AG04449 (cell line): ENCODE measurements at regions of chr11 and their contacts with region 1.

Region 1: DNA sequence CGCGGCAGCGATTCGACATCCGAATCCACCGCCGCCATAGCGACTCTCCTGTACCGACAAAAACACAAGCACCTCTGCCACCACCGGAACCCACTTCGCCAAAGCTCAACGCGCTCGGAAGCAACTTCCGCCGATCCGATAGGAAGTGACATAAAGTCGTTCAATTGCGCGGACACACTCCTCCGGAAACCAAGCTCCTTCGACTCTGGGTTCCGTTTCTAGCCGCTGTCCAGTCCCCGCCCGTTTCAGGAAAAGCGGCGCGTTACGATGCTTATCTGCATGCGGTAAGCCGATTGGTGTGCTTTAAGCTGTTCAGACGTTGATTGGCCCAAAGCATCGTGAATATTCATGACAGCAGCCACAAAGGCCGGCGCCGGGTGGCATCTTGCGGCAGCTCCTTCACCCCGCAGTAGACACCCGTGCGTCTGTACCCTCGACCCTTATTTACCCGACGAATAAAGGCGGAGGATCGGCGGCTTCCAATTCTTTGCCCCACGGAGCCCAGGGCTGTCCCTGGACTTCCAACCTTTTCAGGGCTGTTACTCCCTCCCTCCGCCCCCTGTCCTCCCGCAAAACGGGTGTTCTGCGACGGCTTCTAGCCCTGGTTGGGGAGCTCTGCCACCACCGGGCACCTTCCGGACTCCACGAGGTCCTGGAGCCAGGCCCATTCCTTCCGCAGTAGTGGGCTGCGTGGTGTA is at the start of gene TUT1:
- DNase-seq: peak; percentile 97
- H3K4me3 ChIP-seq: peak within 1 kb of the TSS; percentile 77
- CTCF ChIP-seq: no peak

Region 2: GRCh38 chr11:62419314-62419929 is 172.2 kb before region 1 on chr11:
- CTCF ChIA-PET with region 1: interaction called, 27 read pairs
- POLR2A ChIA-PET with region 1: interaction called, 5 read pairs
- DNase-seq: no peak
- H3K4me3 ChIP-seq: no peak overlapping the region
- CTCF ChIP-seq: no peak

Region 3: DNA sequence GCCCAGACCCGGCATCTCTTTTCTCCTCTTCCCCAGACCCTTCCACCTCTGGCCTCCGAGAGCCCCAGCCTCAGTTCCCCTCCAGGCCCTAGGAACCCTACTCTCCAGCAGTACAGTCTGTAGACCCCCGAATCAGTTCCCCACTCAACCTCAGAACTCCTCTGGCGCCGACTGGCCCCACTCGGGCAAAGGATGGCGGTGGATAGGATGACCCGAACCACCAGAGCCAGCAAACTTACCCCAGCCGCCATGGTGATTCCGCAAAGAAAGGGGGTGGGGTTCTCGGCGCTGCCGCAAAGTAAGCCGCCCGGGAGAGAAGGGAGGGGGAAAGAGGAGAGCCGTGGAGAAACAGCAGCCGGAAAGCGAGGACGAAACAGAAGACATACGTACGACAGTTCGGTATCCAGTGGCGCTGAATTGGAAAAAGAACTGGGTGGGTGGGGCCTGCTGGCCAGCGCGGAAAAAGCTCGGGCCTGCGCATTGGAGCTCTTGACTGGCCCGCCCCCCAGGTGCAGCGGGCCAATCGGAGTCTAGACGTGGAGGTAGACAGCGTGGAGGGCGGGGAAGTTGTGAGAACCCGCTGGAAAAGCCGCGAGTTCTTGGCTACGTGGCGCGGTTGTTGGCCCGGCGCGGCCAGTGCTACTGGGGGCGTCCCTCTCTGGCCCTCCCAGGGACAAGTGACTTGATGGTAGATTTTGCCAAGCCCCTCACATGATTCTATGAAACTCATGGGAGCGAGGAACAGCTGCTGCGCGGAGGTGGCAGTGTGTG is 17.8 kb before region 1 on chr11 and contains the start of gene EEF1G:
- CTCF ChIA-PET with region 1: interaction called, 8 read pairs
- POLR2A ChIA-PET with region 1: interaction called, 65 read pairs
- DNase-seq: peak; percentile 99
- H3K4me3 ChIP-seq: peak within 1 kb of the TSS; percentile 97
- CTCF ChIP-seq: no peak

Region 4: GRCh38 chr11:62612366-62613290 is 21.0 kb after region 1 on chr11 and contains the starts of genes EML3 and ROM1:
- CTCF ChIA-PET with region 1: interaction called, 95 read pairs
- POLR2A ChIA-PET with region 1: interaction called, 14 read pairs
- DNase-seq: no peak
- H3K4me3 ChIP-seq: peak within 1 kb of the TSS; percentile 75
- CTCF ChIP-seq: peak; percentile 95

Region 5: DNA sequence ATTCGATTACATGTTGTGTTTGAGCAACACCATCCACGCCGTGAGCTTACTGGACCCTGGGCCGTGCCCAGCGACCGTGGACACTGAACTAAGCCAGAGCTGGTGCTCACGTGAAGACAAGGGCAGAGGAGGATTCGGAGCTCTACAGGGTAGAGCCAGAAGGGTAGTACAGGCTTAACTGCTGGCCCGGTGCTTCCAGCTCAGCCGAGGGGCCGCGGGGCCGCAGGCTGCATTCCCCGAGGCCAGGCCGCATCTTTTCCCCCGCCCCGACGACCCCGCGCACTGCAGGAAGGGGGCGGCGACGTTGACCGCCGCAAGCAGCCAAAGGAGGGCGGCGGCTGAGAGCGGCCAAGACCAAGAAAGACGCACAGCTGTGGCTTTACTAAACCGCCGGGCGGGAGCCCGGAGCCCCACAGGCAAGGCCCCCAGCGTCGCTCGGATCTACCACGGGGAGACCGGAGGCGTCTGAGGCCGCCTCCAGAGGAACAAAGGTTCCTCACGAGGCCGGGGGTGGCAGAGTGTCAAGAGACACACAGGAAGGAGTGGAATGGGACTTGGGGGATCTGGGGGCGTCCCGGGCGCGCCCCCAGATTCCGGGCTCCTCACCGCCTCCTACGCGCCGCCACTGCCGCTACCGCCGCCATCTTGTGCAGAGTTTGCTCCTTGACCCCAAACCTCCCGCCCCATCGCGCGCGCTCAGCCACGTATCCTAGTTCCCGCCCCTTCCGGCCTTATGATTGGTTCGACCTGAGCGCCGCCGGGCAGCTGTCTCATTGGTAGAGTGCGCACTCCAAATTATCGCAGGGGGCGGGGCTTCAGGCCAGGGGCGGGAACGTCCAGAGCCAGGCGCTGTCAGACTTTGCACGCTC is 54.6 kb after region 1 on chr11 and contains the start of gene GANAB:
- CTCF ChIA-PET with region 1: no interaction called
- POLR2A ChIA-PET with region 1: interaction called, 10 read pairs
- DNase-seq: peak; percentile 87
- H3K4me3 ChIP-seq: peak within 1 kb of the TSS; percentile 91
- CTCF ChIP-seq: no peak

Region 6: GRCh38 chr11:62841361-62842184 is 250.0 kb after region 1 on chr11:
- CTCF ChIA-PET with region 1: no interaction called
- POLR2A ChIA-PET with region 1: interaction called, 15 read pairs
- DNase-seq: peak; percentile 99
- H3K4me3 ChIP-seq: peak overlapping the region; percentile 49
- CTCF ChIP-seq: no peak